Right ventricle myocardium superior (tissue), 1 donor: ENCODE measurements at regions of chr18 and their contacts with region 1.

Region 1: DNA sequence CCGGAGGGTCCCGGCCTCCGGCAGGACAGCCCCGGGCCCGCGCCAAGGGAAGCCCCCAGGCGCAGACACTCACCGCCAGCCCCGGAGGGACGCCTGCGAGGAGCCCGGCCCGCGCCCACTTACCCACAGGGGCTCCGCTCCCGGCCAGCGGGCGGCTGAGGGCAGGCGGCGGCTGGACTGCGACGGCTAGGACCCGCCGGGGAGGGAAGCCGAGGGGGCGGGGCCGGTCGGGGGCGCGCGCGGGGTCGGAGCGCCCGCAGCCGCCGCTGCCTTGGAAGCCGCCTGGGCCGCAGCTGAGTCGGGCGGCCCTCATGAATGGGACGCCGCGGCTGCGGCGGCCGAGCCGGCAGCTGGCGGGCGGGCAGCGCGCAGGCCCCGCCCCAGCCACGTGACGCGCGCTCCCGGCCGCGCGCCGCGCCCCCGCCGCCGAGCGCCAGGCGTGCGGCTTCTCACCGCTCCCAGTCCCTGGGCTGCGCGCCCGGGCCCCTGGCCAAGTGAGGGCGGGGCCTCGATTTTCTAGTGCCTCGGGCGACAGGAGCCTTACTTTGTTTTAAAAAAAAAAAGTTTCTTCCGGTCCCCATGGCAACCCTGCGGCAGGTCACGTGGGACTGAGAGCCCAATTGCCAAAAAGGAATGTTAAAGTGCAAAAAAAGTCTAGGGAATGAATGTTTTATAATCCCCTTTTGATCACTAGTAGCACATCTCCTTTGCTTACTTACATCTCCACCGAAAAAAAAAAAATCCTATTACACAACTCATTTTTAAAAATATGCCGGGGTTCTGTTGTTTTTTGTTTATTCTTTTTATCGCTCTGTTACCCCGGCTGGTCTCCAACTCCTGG is at the start of gene LPIN2:
- DNase-seq: peak; percentile 100
- ATAC-seq: peak; percentile 90
- total RNA-seq, gene LPIN2: 10.4 TPM

Region 2: DNA sequence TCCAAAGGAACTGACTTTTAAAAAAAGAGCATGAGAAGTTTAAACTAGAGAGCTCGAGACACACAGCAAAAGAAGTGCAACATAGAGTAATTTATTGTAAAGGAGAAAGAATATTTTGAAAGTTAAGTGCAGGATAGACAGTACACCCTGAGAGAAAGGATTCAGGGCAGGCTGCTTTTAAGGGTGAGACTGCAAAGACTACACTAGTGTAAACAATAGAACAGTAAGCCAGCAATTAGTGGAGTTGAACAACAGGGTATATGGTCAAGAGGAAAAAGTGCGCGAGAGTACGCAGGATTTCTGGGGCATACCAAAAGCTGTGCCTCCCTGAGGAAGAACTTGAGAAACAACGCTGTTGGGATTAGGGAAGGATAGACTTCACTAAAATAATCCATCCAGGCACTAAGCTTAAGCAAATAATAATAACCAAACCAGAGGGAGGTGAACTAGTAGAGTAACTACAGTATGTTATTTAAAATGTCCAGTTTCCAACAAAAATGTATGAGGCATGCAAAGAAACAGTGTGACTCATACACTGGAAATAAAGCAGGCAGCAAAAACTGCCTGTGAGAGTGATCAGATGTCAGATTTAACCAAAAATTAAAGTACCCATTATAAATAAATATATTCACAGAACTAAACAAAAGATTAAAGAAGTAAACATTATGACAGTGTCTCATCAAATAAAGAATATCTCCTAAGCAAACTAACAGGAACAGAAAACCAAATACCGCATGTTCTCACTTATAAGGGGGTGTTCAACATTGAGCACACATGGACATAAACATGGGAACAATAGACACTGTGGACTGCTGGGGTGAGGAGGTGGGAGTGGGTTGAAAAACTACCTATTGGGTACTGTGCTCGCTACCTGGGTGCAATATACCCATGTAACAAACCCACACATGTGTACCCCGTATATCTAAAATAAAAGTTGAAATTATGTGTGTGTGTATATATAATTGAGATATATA is 206.9 kb before region 1 on chr18:
- intact Hi-C with region 1: no loop called
- DNase-seq: no peak
- ATAC-seq: no peak

Region 3: GRCh38 chr18:2978646-2979045 is 34.5 kb before region 1 on chr18:
- intact Hi-C with region 1: loop called (anchors 5 kb)
- DNase-seq: no peak
- ATAC-seq: no peak